ENCODE measurements at regions of chr1 and their contacts with region 1.

Region 1: DNA sequence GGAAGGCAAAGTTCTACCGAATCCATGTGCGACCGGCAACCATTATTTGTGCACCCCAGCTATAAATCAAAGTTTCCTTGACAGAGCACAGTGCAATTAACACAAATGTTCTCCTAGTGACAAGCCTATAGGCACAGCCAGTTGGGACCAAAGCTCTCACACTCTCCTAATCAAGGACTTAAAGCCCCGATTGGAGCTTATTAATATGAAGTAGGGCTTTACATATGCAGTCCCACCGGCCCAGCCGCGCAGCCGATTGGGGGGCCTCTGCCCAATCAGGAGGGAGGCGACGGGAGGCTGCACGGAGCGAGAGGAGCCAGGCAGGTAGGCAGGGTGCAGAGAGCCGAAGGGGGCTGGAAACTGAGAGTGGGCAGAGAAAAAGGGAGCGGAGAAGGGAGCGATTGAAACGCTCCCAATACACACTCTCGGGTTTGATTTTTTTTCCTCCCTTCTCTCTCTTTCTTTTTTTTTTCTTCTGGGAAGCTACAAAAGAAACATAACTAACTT is at the start of gene ESRRG:
- DNase-seq: peak; percentile 60 to 84 (median 77)
- ATAC-seq: peak; percentile 95 to 98 (median 97)
- H3K4me3 ChIP-seq: peak within 1 kb of the TSS; percentile 19 to 60 (median 50)
- H3K27ac ChIP-seq: peak within 1 kb of the TSS in 11 of 12 donors; percentile 31 to 70 (median 46)
- H3K4me1 ChIP-seq: peaks cover 0 to 12% (median 0%) of the 10 kb centered on the region in 12 donors
- H3K27me3 ChIP-seq: peaks cover 0 to 35% (median 6%) of the 10 kb centered on the region in 9 donors
- CTCF ChIP-seq: no peak
- POLR2A ChIP-seq: peak in 1 of 2 donors; percentile 79
- total RNA-seq, gene ESRRG: 26.6 to 45.2 (median 40.4) TPM

Region 2: DNA sequence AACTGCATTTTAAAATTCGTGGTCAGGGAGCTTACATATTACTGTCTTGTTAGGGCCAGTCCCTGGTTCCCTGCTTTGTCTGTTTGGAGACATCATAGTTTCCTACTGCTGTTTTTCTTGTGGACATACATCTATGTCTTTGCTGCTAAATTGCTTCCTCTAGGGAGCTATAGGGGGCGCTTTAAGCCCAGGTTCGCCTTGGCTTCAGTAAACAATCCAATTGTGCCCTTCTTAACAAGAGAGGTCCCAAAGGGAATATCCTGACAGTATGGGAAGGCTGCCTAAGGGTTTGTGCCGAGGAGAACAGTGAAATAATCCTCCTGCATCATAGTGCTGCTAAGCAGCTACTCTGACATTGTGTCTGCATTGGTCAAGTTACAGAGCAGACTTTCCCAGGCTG is 412.6 kb before region 1 on chr1:
- intact Hi-C with region 1: loop called in 1 of 10 experiments (anchors 10 kb)
- DNase-seq: no peak
- ATAC-seq: peak in 3 of 4 donors; percentile 33 to 54 (median 44)
- H3K4me3 ChIP-seq: no peak overlapping the region
- H3K27ac ChIP-seq: no peak overlapping the region
- H3K4me1 ChIP-seq: no peaks in the 10 kb centered on the region
- H3K27me3 ChIP-seq: no peaks in the 10 kb centered on the region
- CTCF ChIP-seq: peak in 11 of 12 donors; percentile 12 to 56 (median 40)
- POLR2A ChIP-seq: no peak

Region 3: GRCh38 chr1:216600730-216601609 is 122.4 kb before region 1 on chr1:
- intact Hi-C with region 1: loop called in 3 of 10 experiments (anchors 5 to 10 kb)
- DNase-seq: peak; percentile 71 to 88 (median 83)
- ATAC-seq: peak; percentile 88 to 99 (median 95)
- H3K4me3 ChIP-seq: peak overlapping the region; percentile 46 to 81 (median 67)
- H3K27ac ChIP-seq: peak overlapping the region; percentile 87 to 97 (median 94)
- H3K4me1 ChIP-seq: peaks cover 0 to 13% (median 4%) of the 10 kb centered on the region in 12 donors
- H3K27me3 ChIP-seq: no peaks in the 10 kb centered on the region
- CTCF ChIP-seq: peak in 11 of 12 donors; percentile 18 to 69 (median 55)
- POLR2A ChIP-seq: peak in 1 of 2 donors; percentile 49

Region 4: GRCh38 chr1:216616425-216616824 is 106.9 kb before region 1 on chr1:
- intact Hi-C with region 1: loop called in 1 of 10 experiments (anchors 2 kb)
- DNase-seq: no peak
- ATAC-seq: peak; percentile 40 to 47 (median 42)
- H3K4me3 ChIP-seq: no peak overlapping the region
- H3K27ac ChIP-seq: peak overlapping the region; percentile 7 to 77 (median 50)
- H3K4me1 ChIP-seq: peaks cover 0 to 15% (median 7%) of the 10 kb centered on the region in 12 donors
- H3K27me3 ChIP-seq: no peaks in the 10 kb centered on the region
- CTCF ChIP-seq: no peak
- POLR2A ChIP-seq: no peak